GM23248 (cell line): ENCODE measurements at regions of chr18 and their contacts with region 1.

Region 1: DNA sequence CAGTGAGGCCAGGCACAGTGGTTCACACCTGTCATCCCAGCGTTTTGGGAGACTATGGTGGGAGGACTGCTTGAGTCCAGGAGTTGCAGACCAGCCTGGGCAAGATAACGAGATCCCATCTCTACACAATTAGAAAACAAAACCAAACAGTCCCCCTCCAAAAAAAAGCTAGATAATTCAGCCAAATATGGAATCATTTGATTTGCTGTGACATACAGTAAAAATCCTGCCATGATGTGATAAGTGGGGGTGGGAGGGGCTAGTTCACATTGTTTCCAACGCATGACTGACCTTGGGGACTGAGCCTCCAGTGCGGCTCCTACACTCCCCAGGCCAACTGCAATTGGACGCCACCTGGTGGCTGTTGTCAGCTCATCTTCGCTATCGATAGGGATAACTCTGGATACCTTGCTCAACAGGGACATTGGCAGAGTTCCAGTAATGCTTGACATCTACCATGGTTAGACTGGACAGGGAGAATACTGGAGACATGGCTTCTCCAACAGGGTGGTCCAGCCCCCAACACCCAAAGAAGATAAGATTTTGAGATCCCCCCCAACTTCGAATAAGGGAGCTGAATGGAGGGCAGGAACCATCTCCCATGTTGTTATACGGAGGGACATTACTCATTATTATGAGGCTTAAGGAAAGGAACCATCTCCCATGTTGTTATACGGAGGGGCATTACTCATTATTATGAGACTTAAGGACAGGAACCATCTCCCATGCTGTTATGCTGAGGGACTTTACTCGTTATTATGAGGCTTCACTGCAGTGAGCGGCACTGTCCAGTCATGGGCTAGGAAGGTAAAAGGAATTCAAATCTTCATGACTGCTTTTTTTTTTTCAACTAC is 135.9 kb downstream of the TGIF1 start:
- DNase-seq: peak; percentile 84
- H3K4me3 ChIP-seq: no peak overlapping the region
- H3K27ac ChIP-seq: no peak overlapping the region
- H3K4me1 ChIP-seq: peaks cover 16% of the 10 kb centered on the region
- H3K27me3 ChIP-seq: no peaks in the 10 kb centered on the region

Region 2: GRCh38 chr18:2589345-2590068 is 996.4 kb before region 1 on chr18:
- in situ Hi-C with region 1: no loop called
- DNase-seq: no peak
- H3K4me3 ChIP-seq: no peak overlapping the region
- H3K27ac ChIP-seq: no peak overlapping the region
- H3K4me1 ChIP-seq: peaks cover 20% of the 10 kb centered on the region
- H3K27me3 ChIP-seq: no peaks in the 10 kb centered on the region

Region 3: GRCh38 chr18:3281456-3282400 is 304.2 kb before region 1 on chr18:
- in situ Hi-C with region 1: loop called (anchors 10 kb)
- DNase-seq: peak; percentile 81
- H3K4me3 ChIP-seq: no peak overlapping the region
- H3K27ac ChIP-seq: no peak overlapping the region
- H3K4me1 ChIP-seq: peaks cover 6% of the 10 kb centered on the region
- H3K27me3 ChIP-seq: no peaks in the 10 kb centered on the region

Region 4: GRCh38 chr18:3466045-3466444 is 119.8 kb before region 1 on chr18:
- in situ Hi-C with region 1: loop called (anchors 10 kb)
- DNase-seq: peak; percentile 92
- H3K4me3 ChIP-seq: peak overlapping the region; percentile 40; the same call in 1 of the 2 replicates
- H3K27ac ChIP-seq: peak overlapping the region; percentile 64
- H3K4me1 ChIP-seq: peaks cover 31% of the 10 kb centered on the region
- H3K27me3 ChIP-seq: no peaks in the 10 kb centered on the region